ENCODE measurements at regions of chr7 and their contacts with region 1.

Region 1: DNA sequence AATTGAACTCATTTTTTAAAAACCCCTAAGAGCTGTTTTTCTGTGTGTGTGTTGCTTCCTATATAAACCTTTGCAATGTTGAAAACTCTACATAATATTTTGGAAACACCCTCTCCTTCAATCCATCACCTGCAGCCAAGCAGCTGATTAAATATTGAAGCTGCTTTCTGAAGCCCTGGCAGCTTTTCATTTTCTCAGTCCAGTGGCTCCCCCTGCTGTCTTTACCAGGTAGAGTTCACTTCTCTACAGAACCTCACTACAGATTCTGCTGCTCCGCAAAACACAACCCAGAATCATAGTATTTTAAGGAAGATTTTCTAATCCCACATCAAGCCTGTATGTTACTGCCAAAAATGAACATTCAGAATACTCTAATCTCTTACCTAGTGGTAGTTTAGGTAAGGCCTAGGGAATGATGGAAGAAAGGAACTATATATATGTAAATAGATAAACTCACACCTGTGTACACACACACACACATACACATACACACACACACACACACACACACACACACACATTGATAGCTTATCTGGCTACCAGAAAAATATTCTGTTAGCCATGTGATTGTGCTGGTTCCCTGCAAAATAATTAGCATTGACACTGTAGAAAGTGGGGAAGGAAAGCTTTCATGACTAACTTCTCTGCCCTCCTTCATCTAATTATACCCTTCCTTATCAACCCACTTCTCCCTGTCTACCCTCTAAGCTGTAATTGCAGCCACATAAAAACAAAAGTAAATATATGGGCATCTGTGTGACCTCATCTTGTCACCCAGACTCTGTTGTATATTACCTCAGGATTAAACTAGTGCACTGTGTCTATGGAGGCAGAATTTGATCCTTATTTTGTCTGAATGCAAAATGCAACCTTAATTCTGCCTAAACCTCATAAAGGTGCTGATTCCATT is 229.5 kb upstream of the FZD1 start:
- DNase-seq: peak; percentile 55
- H3K4me3 ChIP-seq: no peak overlapping the region
- H3K27ac ChIP-seq: no peak overlapping the region
- H3K4me1 ChIP-seq: no peaks in the 10 kb centered on the region
- H3K27me3 ChIP-seq: no peaks in the 10 kb centered on the region
- CTCF ChIP-seq: peak; percentile 36 to 72 (median 62)
- POLR2A ChIP-seq: no peak

Region 2: GRCh38 chr7:90455163-90456030 is 579.3 kb before region 1 on chr7:
- intact Hi-C with region 1: loop called (anchors 5 kb)
- DNase-seq: peak; percentile 24
- H3K4me3 ChIP-seq: no peak overlapping the region
- H3K27ac ChIP-seq: no peak overlapping the region
- H3K4me1 ChIP-seq: no peaks in the 10 kb centered on the region
- H3K27me3 ChIP-seq: no peaks in the 10 kb centered on the region
- CTCF ChIP-seq: peak in 3 of 4 experiments; percentile 59 to 84 (median 72)
- POLR2A ChIP-seq: no peak

Region 3: DNA sequence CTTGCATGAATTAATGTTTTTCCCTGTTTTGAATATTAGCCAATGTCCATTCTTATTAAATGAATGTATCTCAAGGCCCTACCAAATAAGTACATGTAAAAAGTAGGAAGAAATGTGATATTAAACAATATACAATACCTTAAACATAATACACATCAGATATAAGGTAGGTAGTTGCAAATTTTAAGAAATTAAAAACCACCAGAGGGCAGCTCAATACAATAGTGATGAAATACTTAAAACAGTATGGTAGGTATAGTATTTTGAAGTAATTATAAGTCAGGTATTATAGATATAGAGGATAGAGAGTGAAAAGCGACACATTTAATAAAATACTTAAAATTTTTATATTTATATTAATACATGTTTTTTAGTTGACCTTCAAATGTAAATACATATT is 482.2 kb before region 1 on chr7:
- intact Hi-C with region 1: loop called (anchors 10 kb)
- DNase-seq: no peak
- H3K4me3 ChIP-seq: no peak overlapping the region
- H3K27ac ChIP-seq: no peak overlapping the region
- H3K4me1 ChIP-seq: no peaks in the 10 kb centered on the region
- H3K27me3 ChIP-seq: no peaks in the 10 kb centered on the region
- CTCF ChIP-seq: peak in 3 of 4 experiments; percentile 22 to 33 (median 24)
- POLR2A ChIP-seq: no peak

Region 4: DNA sequence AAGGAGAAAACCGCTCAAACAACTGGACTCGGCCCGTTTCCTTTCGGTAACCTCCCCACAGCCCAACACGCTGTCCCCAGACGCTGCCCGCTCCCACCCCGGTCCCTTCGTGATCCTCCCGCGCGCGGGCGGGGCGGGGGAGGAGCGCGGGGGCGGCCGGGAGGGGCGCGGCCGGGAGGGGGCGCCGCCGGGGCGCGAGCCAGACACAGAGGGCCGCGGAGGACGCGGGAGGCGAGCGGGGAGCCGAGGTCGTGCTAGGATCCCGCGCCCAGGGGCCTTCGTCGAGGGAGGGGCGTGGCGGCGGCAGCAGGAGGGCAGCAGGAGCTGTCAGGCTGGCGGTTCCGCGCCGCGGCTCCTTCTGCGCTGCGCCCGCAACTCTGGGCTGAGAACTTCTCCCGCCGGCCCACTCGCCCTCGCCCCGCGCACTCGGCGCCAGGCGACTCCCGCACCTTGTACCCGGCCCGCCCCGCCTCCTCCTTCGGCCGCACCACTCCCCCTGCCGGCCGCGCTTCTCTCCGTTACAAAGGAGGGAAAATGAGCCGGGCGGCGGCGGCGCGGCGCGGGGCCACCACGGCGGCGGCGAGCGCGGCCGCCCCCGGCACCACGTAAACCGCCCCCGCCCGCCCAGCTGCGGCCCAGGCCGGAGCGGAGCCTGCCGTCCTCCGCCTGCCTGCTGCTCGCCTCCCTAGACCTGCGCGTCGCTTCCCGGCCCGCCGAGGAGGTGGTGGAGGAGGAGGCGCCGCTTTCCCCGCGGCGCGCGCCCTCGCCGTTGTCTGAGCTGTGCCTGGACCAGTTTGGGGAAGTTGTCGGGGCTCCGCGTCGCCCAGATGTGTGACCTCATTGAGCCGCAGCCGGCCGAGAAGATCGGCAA is 438.7 kb before region 1 on chr7 and contains the start of gene CDK14:
- intact Hi-C with region 1: loop called (anchors 5 kb)
- DNase-seq: peak; percentile 69
- H3K4me3 ChIP-seq: peak within 1 kb of the TSS; percentile 63 to 79
- H3K27ac ChIP-seq: peak within 1 kb of the TSS; percentile 84
- H3K4me1 ChIP-seq: no peaks in the 10 kb centered on the region
- H3K27me3 ChIP-seq: no peaks in the 10 kb centered on the region
- CTCF ChIP-seq: peak; percentile 23 to 65 (median 54)
- POLR2A ChIP-seq: peak; percentile 40
- total RNA-seq, gene CDK14: 13.7 to 20.7 TPM

Region 5: DNA sequence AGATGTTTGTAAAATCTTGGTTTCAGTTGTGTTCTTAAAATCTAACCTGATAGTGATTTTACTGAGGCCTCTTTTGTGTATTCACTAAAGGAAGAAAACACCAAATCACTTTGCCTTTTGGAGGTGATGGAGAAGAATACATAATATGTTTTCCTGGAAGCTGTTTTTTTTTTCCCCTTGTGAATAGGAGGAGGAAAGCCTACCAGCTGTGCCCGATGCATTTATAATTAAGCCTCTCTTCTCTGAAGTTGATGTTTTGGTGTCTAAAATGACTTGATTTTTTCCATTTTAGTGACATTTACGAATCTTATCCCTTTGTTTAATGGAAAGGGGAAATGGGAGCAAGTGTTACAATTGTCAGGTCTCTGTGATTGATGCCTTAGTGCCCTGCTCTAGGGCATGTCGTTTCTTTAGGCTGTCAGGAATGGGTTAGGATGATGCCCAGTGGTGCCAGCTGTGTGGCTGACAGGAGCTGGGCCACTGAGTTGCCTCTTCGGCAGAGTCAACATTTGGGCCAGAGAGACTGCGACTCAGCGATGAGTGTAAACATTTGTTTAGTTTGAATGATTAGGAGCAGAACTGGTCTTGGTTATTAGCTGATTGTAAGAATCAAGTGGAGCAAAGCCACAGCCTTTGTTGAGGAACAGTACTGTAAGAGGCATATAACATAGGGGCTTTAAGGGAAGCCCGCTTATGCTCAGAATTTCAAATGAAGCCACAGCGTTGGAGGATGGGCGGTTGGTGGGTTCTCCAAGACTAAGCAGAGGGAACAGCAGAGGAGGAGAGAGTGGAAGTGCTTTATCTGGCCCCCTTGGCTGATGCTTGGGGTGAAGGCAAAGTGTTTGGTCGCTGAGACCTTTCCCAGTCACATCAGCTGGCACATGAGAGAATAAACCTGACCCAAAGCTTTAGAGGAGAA is 357.0 kb before region 1 on chr7:
- intact Hi-C with region 1: no loop called
- DNase-seq: no peak
- H3K4me3 ChIP-seq: no peak overlapping the region
- H3K27ac ChIP-seq: no peak overlapping the region
- H3K4me1 ChIP-seq: no peaks in the 10 kb centered on the region
- H3K27me3 ChIP-seq: no peaks in the 10 kb centered on the region
- CTCF ChIP-seq: no peak
- POLR2A ChIP-seq: no peak

Region 6: DNA sequence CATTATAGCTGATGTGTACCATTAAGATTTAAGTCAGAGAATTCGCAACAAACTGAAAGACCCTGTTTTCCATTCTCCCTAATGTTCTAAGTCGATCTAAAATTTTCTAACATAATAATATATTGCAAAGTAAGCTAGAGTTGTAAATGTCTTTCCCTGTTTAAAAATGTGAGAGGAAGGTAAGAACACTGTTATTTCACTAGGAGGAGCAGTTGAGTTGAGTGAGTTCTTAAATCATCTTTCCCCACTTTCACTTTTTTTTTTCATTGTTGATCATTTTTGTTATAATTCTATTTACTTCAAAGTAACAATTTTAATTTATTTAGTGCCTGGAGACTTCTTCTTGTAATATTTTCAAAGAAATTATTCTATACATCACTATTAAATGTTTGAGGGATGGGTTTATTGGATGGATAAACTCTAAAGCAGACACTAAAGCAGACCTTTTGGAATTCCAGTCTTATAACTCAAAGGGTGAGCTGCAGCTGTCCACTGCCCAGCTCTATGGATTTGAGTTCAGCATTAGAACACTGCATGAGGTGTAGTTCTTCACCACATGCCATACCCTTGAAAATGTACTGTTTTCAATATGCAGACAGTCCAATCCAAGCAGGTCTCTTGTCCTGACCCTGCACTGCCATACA is 48.3 kb after region 1 on chr7:
- intact Hi-C with region 1: no loop called
- DNase-seq: no peak
- H3K4me3 ChIP-seq: no peak overlapping the region
- H3K27ac ChIP-seq: no peak overlapping the region
- H3K4me1 ChIP-seq: no peaks in the 10 kb centered on the region
- H3K27me3 ChIP-seq: no peaks in the 10 kb centered on the region
- CTCF ChIP-seq: peak in 3 of 4 experiments; percentile 26 to 61 (median 54)
- POLR2A ChIP-seq: no peak

Region 7: GRCh38 chr7:92504563-92504962 is 1469.8 kb after region 1 on chr7:
- intact Hi-C with region 1: no loop called
- DNase-seq: no peak
- H3K4me3 ChIP-seq: no peak overlapping the region
- H3K27ac ChIP-seq: no peak overlapping the region
- H3K4me1 ChIP-seq: no peaks in the 10 kb centered on the region
- H3K27me3 ChIP-seq: no peaks in the 10 kb centered on the region
- CTCF ChIP-seq: no peak
- POLR2A ChIP-seq: no peak

Measured in prostate gland (tissue), 2 donors.